ENCODE measurements at regions of chr2 and their contacts with region 1.

Region 1: GRCh38 chr2:200901459-200902072 is 12.4 kb downstream of the NIF3L1 start:
- DNase-seq: peak; percentile 84 to 86
- H3K4me3 ChIP-seq: no peak overlapping the region
- H3K4me3 Mint-ChIP-seq: no peak overlapping the region
- H3K27ac Mint-ChIP-seq: no peak overlapping the region
- H3K4me1 ChIP-seq: no peaks in the 10 kb centered on the region
- H3K4me1 Mint-ChIP-seq: peaks cover 6% of the 10 kb centered on the region
- H3K27me3 ChIP-seq: no peaks in the 10 kb centered on the region
- H3K27me3 Mint-ChIP-seq: no peaks in the 10 kb centered on the region
- CTCF ChIP-seq: peak; percentile 85 to 90

Region 2: GRCh38 chr2:200787348-200788120 is 114.0 kb before region 1 on chr2:
- CTCF ChIA-PET with region 1: no interaction called
- POLR2A ChIA-PET with region 1: no interaction called
- intact Hi-C with region 1: no loop called
- DNase-seq: no peak
- H3K4me3 ChIP-seq: no peak overlapping the region
- H3K4me3 Mint-ChIP-seq: no peak overlapping the region
- H3K27ac Mint-ChIP-seq: no peak overlapping the region
- H3K4me1 ChIP-seq: peaks cover 13% of the 10 kb centered on the region
- H3K4me1 Mint-ChIP-seq: peaks cover 6% of the 10 kb centered on the region
- H3K27me3 ChIP-seq: no peaks in the 10 kb centered on the region
- H3K27me3 Mint-ChIP-seq: no peaks in the 10 kb centered on the region
- CTCF ChIP-seq: no peak

Region 3: DNA sequence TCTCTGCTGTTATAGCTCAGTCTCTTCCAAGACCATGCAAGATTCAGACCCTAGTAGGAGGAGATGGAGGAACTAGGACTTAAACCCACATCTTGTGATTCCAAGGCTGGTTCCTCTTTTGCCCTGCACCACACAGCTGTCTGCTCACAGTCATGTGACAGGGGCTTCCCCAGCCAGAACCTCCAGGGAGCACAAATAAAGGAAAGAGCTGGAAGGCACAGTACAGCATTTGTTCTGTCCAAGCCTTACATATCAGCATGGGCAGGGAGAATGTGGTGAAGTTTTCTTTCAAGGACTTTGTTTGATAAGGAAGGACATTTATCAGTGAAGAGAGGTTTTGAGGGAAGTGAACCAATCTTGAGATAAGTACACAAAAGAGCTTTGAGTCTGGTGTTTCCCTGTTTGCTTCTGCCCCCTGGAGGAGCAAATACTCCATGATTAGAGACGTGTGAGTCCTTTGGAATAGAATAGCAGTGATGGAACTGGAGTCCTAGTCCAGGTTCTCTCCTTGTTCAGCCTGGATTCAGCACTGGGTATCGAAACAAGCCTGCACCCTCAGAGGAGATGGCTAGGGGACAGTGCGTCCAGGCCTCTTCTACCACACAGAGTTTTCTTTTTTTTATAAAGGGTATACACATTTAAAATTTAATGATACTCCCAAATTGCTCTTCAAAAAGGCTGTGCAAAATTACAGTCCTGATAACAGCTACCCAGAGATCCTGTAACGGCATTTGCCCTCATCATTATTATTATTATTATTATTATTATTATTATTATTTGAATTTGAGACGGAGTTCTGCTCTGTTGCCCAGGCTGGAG is 256.8 kb after region 1 on chr2:
- CTCF ChIA-PET with region 1: interaction called, 12 read pairs
- POLR2A ChIA-PET with region 1: no interaction called
- intact Hi-C with region 1: loop called (anchors 1 kb)
- DNase-seq: peak; percentile 84 to 86
- H3K4me3 ChIP-seq: no peak overlapping the region
- H3K4me3 Mint-ChIP-seq: peak overlapping the region; percentile 40
- H3K27ac Mint-ChIP-seq: peak overlapping the region; percentile 86
- H3K4me1 ChIP-seq: peaks cover 12% of the 10 kb centered on the region
- H3K4me1 Mint-ChIP-seq: peaks cover 13% of the 10 kb centered on the region
- H3K27me3 ChIP-seq: no peaks in the 10 kb centered on the region
- H3K27me3 Mint-ChIP-seq: no peaks in the 10 kb centered on the region
- CTCF ChIP-seq: peak; percentile 71 to 84

Region 4: GRCh38 chr2:201680743-201681142 is 779.2 kb after region 1 on chr2:
- CTCF ChIA-PET with region 1: no interaction called
- POLR2A ChIA-PET with region 1: no interaction called
- intact Hi-C with region 1: no loop called
- DNase-seq: peak; percentile 56 to 61
- H3K4me3 ChIP-seq: no peak overlapping the region
- H3K4me3 Mint-ChIP-seq: no peak overlapping the region
- H3K27ac Mint-ChIP-seq: no peak overlapping the region
- H3K4me1 ChIP-seq: no peaks in the 10 kb centered on the region
- H3K4me1 Mint-ChIP-seq: no peaks in the 10 kb centered on the region
- H3K27me3 ChIP-seq: no peaks in the 10 kb centered on the region
- H3K27me3 Mint-ChIP-seq: peaks cover 3% of the 10 kb centered on the region
- CTCF ChIP-seq: peak; percentile 54 to 66

Measured in Caco-2 (cell line).